ENCODE measurements at regions of chr10 and their contacts with region 1.

Region 1: GRCh38 chr10:16965740-16966447 is 148.7 kb upstream of the RSU1 start:
- DNase-seq: peak; percentile 91
- H3K4me3 ChIP-seq: no peak overlapping the region
- H3K27ac ChIP-seq: peak overlapping the region; percentile 98
- H3K4me1 ChIP-seq: peaks cover 40% of the 10 kb centered on the region
- H3K27me3 ChIP-seq: no peaks in the 10 kb centered on the region
- CTCF ChIP-seq: no peak
- POLR2A ChIP-seq: peak; percentile 44

Region 2: GRCh38 chr10:16792675-16793074 is 173.2 kb before region 1 on chr10:
- CTCF ChIA-PET with region 1: no interaction called
- POLR2A ChIA-PET with region 1: no interaction called
- dilution Hi-C with region 1: no loop called
- intact Hi-C with region 1: no loop called
- DNase-seq: no peak
- H3K4me3 ChIP-seq: no peak overlapping the region
- H3K27ac ChIP-seq: no peak overlapping the region
- H3K4me1 ChIP-seq: no peaks in the 10 kb centered on the region
- H3K27me3 ChIP-seq: no peaks in the 10 kb centered on the region
- CTCF ChIP-seq: no peak
- POLR2A ChIP-seq: no peak

Region 3: DNA sequence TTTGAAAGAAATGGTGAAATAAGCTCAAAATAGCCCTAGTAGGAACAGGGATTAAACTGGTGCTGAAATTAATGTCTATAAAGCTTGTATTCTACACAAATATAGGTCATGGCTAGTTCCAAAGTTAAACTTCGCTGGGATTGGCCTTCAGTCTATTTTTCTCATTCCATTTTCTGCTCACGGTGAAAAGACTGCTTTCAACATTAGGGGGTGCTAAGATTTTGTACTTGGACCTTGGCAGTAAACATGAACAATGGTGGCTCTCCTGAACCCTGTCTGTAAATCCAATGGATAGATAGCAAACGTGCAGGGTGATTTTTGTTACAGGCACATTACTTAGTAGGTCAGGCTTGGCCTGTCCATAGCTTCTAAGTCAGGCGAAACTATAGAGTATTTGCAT is 112.7 kb before region 1 on chr10:
- CTCF ChIA-PET with region 1: interaction called, 4 read pairs
- POLR2A ChIA-PET with region 1: no interaction called
- dilution Hi-C with region 1: no loop called
- intact Hi-C with region 1: loop called (anchors 1 kb)
- DNase-seq: peak; percentile 73
- H3K4me3 ChIP-seq: no peak overlapping the region
- H3K27ac ChIP-seq: no peak overlapping the region
- H3K4me1 ChIP-seq: peaks cover 23% of the 10 kb centered on the region
- H3K27me3 ChIP-seq: no peaks in the 10 kb centered on the region
- CTCF ChIP-seq: peak; percentile 35 to 39
- POLR2A ChIP-seq: no peak

Region 4: GRCh38 chr10:16909961-16910792 is 55.7 kb before region 1 on chr10:
- CTCF ChIA-PET with region 1: interaction called, 7 read pairs
- POLR2A ChIA-PET with region 1: no interaction called
- dilution Hi-C with region 1: no loop called
- intact Hi-C with region 1: loop called (anchors 1 kb)
- DNase-seq: peak; percentile 60
- H3K4me3 ChIP-seq: no peak overlapping the region
- H3K27ac ChIP-seq: peak overlapping the region; percentile 82
- H3K4me1 ChIP-seq: peaks cover 20% of the 10 kb centered on the region
- H3K27me3 ChIP-seq: no peaks in the 10 kb centered on the region
- CTCF ChIP-seq: no peak
- POLR2A ChIP-seq: no peak

Region 5: DNA sequence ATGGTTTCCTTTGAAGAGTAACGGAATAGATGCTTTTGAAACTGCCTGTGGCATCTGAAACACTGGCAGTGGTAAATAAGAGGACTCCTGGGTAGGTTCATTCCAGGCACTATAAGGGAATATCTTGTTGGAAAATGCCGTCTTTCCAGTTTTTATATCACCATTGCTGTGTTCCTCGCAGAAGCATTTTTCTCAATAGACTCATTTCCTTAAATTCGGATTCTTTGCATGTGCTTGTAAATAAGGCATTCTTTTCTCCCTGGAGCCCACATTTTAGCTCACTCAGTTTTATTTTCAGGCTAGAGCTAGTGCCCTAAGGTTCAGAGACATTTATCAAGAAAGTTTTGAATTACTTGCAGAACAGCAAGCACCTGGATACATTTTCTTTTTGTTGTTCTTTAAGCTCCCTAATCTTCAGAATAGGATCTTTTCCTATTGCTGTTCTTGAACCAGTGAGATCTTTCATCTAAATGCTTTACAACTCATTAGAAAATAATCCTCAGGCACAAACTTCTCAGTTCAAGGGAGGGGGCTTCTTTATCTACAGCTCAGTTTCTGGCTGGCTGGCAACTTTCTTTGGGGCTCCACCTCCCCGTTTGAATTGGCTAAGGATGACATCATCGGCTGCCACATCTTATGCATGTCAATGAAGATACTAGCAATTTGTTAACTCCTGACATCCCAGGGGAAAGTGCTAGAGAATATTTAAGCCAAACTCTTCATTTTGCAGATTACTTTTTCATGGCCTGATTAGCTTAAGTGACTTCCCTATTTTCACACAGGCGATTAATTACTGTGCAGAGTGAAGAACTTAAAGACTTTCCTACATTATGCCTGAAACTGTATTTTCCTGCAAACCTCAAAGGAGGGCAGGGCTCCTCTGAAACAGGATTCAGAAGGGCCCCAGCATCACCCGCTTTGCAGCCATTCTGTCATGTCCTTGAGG is 15.0 kb before region 1 on chr10:
- CTCF ChIA-PET with region 1: interaction called, 3 read pairs
- POLR2A ChIA-PET with region 1: no interaction called
- dilution Hi-C with region 1: no loop called
- intact Hi-C with region 1: loop called (anchors 1 kb)
- DNase-seq: peak; percentile 89
- H3K4me3 ChIP-seq: no peak overlapping the region
- H3K27ac ChIP-seq: peak overlapping the region; percentile 66
- H3K4me1 ChIP-seq: peaks cover 40% of the 10 kb centered on the region
- H3K27me3 ChIP-seq: no peaks in the 10 kb centered on the region
- CTCF ChIP-seq: no peak
- POLR2A ChIP-seq: no peak

Region 6: GRCh38 chr10:17023386-17024298 is 57.7 kb after region 1 on chr10:
- CTCF ChIA-PET with region 1: no interaction called
- POLR2A ChIA-PET with region 1: interaction called, 3 read pairs
- dilution Hi-C with region 1: no loop called
- intact Hi-C with region 1: loop called (anchors 1 kb)
- DNase-seq: peak; percentile 96
- H3K4me3 ChIP-seq: peak overlapping the region in 1 of 3 experiments; percentile 35
- H3K27ac ChIP-seq: peak overlapping the region; percentile 72
- H3K4me1 ChIP-seq: peaks cover 51% of the 10 kb centered on the region
- H3K27me3 ChIP-seq: no peaks in the 10 kb centered on the region
- CTCF ChIP-seq: no peak
- POLR2A ChIP-seq: peak; percentile 22

Region 7: DNA sequence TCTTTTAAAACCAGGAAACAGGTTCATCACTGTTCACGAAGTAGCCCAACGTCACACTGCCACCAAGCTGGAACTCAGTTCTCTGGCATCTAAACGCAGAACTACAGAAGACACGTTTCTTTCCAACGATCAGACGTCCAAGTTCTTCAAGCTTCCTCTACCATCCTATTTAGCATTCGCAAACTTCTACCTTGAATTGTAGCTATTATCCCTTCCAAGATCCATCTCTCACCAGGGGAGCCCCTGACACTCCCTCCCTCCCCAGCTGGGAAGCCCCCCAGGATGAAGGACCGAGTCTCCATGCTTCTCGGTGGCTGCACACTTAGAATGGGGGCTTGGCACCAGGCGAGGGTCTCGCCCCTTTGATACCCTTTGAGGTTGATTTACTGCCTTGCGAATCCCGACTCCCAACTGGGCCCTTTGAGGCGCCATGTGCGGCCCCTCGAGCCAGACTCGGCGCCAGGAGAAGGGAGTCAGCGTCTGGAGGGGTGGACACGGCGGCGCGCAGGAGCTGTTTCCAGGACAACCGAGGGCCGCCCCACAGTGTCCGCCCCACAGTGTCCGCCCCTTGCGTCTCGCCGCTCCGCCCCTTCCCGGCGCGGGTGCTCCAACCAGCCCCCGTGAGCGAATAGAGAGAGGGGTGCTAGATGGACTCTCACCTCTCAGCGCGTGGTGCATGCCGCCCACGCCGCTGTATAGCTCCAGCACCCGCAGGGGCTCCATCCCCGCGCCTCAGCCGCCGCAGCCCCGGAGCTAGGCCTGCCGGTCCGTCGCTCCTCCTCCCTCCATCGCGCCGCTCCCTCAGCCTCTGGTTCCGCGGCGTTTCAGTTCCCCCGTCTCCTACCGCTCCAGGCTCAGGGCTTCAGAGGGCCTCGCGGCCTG is 235.3 kb after region 1 on chr10 and contains the start of gene TRDMT1:
- CTCF ChIA-PET with region 1: interaction called, 5 read pairs
- POLR2A ChIA-PET with region 1: interaction called, 3 read pairs
- dilution Hi-C with region 1: no loop called
- intact Hi-C with region 1: loop called (anchors 1 kb)
- DNase-seq: peak; percentile 91
- H3K4me3 ChIP-seq: peak within 1 kb of the TSS; percentile 69 to 95 (median 91)
- H3K27ac ChIP-seq: peak within 1 kb of the TSS; percentile 100
- H3K4me1 ChIP-seq: peaks cover 28% of the 10 kb centered on the region
- H3K27me3 ChIP-seq: no peaks in the 10 kb centered on the region
- CTCF ChIP-seq: no peak
- POLR2A ChIP-seq: peak; percentile 86
- total RNA-seq, gene TRDMT1: 12.3 and 15.2 TPM in 2 replicates

Region 8: DNA sequence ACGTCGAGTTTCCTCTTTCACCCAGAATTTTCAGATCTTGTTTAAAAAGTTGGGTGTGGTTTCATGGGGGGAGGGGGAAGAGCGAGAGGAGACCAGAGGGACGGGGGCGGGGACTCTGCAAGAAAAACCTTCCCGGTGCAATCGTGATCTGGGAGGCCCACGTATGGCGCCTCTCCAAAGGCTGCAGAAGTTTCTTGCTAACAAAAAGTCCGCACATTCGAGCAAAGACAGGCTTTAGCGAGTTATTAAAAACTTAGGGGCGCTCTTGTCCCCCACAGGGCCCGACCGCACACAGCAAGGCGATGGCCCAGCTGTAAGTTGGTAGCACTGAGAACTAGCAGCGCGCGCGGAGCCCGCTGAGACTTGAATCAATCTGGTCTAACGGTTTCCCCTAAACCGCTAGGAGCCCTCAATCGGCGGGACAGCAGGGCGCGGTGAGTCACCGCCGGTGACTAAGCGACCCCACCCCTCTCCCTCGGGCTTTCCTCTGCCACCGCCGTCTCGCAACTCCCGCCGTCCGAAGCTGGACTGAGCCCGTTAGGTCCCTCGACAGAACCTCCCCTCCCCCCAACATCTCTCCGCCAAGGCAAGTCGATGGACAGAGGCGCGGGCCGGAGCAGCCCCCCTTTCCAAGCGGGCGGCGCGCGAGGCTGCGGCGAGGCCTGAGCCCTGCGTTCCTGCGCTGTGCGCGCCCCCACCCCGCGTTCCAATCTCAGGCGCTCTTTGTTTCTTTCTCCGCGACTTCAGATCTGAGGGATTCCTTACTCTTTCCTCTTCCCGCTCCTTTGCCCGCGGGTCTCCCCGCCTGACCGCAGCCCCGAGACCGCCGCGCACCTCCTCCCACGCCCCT is 262.4 kb after region 1 on chr10 and contains the start of gene VIM:
- CTCF ChIA-PET with region 1: interaction called, 11 read pairs
- POLR2A ChIA-PET with region 1: interaction called, 27 read pairs
- dilution Hi-C with region 1: no loop called
- intact Hi-C with region 1: loop called (anchors 1 kb)
- DNase-seq: peak; percentile 97
- H3K4me3 ChIP-seq: peak within 1 kb of the TSS; percentile 66 to 87 (median 83)
- H3K27ac ChIP-seq: peak within 1 kb of the TSS; percentile 99
- H3K4me1 ChIP-seq: peaks cover 24% of the 10 kb centered on the region
- H3K27me3 ChIP-seq: no peaks in the 10 kb centered on the region
- CTCF ChIP-seq: peak in 1 of 2 donors; percentile 16
- POLR2A ChIP-seq: peak; percentile 92
- total RNA-seq, gene VIM: 5,754 and 5,781 TPM in 2 replicates